ENCODE measurements at regions of chr1 and their contacts with region 1.

Region 1: GRCh38 chr1:119475866-119476439 is 31.1 kb upstream of the HSD3B1 start:
- DNase-seq: no peak
- ATAC-seq: peak; percentile 96
- H3K4me3 ChIP-seq: no peak overlapping the region
- H3K27ac ChIP-seq: no peak overlapping the region
- H3K4me1 ChIP-seq: no peaks in the 10 kb centered on the region
- H3K27me3 ChIP-seq: no peaks in the 10 kb centered on the region
- CTCF ChIP-seq: peak; percentile 64 to 83 (median 81)
- EP300 ChIP-seq: no peak
- POLR2A ChIP-seq: no peak
- RAD21 ChIP-seq: peak; percentile 59

Region 2: DNA sequence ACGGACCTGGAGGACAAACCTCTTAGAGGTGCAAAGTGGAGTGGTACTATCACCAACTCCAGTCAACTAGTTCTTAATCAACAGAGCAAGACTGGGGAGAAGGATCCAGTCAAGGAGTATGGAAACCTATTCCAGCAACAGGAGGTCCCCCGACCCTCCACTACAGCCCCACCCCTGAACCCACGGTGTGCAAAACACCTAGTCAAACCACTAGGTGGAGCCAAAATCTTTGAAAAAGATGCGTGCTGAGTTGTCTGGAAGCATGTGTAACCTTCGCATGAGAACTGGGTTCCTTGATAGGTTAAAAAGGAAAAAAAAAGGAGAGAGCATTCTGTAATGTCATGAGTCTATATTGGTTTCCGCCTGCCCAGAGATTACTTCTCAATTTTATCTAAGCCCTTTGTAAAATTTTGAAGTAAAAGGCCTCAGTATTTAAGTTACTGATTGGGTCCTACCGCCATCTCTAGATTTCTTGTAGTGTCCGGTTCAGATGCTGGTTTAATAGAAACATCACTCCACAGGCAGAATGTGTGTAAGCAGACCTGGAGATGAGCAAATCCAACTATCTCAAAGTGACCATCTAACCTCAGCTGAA is 189.3 kb before region 1 on chr1:
- CTCF ChIA-PET with region 1: no interaction called
- POLR2A ChIA-PET with region 1: no interaction called
- RAD21 ChIA-PET with region 1: no interaction called
- SMC1A ChIA-PET with region 1: no interaction called
- in situ Hi-C with region 1: no loop called
- intact Hi-C with region 1: loop called (anchors 5 kb)
- DNase-seq: no peak
- ATAC-seq: peak; percentile 98
- H3K4me3 ChIP-seq: no peak overlapping the region
- H3K27ac ChIP-seq: no peak overlapping the region
- H3K4me1 ChIP-seq: no peaks in the 10 kb centered on the region
- H3K27me3 ChIP-seq: no peaks in the 10 kb centered on the region
- CTCF ChIP-seq: peak; percentile 67 to 73 (median 72)
- EP300 ChIP-seq: no peak
- POLR2A ChIP-seq: no peak
- RAD21 ChIP-seq: peak; percentile 97

Region 3: DNA sequence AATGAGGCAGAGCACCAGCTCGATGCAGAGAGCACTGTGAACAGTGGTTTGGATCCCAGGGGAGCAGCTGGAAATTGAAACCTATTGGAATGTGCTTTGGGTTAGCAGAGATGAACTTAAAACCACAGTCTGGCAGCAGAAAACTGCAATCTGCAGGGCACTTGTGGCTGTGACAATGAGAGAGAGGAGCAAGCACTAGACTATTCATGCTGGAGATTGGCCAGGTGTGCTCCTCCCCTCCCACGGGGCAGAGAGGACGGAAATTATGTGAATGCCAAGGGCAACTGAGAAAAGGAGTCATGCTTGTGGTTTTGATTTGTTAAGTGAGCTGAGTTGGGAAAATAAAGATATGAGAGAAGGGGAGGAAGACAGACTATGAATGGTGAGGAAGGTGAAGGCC is 22.9 kb before region 1 on chr1:
- CTCF ChIA-PET with region 1: no interaction called
- POLR2A ChIA-PET with region 1: no interaction called
- RAD21 ChIA-PET with region 1: no interaction called
- SMC1A ChIA-PET with region 1: no interaction called
- in situ Hi-C with region 1: no loop called
- intact Hi-C with region 1: loop called (anchors 2 kb)
- DNase-seq: no peak
- ATAC-seq: no peak
- H3K4me3 ChIP-seq: no peak overlapping the region
- H3K27ac ChIP-seq: no peak overlapping the region
- H3K4me1 ChIP-seq: no peaks in the 10 kb centered on the region
- H3K27me3 ChIP-seq: no peaks in the 10 kb centered on the region
- CTCF ChIP-seq: no peak
- EP300 ChIP-seq: no peak
- POLR2A ChIP-seq: no peak
- RAD21 ChIP-seq: no peak

Measured in GM12878 (cell line).